ENCODE measurements at regions of chr9 and their contacts with region 1.

Region 1: GRCh38 chr9:36245906-36246305 is 12.3 kb downstream of the GNE start:
- DNase-seq: peak; percentile 33
- H3K4me3 ChIP-seq: no peak overlapping the region
- H3K27ac ChIP-seq: no peak overlapping the region
- H3K4me1 ChIP-seq: no peaks in the 10 kb centered on the region
- H3K27me3 ChIP-seq: no peaks in the 10 kb centered on the region

Region 2: GRCh38 chr9:36337865-36338264 is 92.0 kb after region 1 on chr9:
- in situ Hi-C with region 1: loop called (anchors 10 kb)
- DNase-seq: no peak
- H3K4me3 ChIP-seq: no peak overlapping the region
- H3K27ac ChIP-seq: no peak overlapping the region
- H3K4me1 ChIP-seq: no peaks in the 10 kb centered on the region
- H3K27me3 ChIP-seq: no peaks in the 10 kb centered on the region

Measured in GM23248 (cell line).